PC-3 (cell line): ENCODE measurements at regions of chr10 and their contacts with region 1.

Region 1: DNA sequence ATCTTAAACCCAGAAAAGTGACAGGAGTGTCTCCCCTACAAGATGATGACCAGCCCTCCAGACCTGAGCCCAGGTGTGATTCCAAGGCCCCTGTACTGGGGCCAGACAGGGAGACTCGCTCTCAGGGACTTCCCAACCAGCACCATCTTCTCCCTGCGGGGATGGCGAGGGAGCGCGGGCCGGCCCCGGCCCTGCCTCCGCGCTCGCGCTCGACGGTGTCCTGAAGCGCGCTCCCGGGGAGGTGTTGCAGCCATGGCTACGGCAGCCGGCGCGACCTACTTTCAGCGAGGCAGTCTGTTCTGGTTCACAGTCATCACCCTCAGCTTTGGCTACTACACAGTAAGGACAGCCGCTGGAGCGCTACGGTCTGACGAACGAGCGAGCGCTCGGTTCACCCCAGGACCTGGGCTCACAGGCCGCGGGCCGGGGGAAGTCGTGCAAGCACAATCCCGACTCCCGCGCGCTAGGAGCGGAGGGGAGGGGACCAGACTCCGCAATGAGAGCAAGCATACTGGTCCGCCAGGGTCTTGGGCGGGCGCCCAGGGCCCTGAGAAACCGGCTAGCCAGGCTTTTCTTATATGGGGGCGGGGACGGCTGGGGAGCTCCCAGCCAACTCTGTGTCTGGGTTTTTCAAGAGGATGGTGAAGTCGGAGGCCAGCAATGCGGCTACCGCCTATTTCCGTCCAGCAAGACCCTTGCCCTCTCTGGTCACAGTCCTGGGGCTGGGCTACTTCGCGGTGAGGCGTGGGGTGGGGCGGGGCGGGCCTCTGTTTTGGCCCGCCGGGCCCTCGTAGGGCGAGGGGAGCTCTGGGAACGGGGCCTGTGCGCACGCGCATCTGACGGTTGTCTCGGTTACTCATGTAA is at the start of gene TMEM254:
- DNase-seq: peak; percentile 100
- ATAC-seq: peak; percentile 85
- H3K4me3 ChIP-seq: peak within 1 kb of the TSS; percentile 67
- H3K27ac ChIP-seq: peak within 1 kb of the TSS; percentile 72
- H3K4me1 ChIP-seq: peaks cover 39% of the 10 kb centered on the region
- H3K27me3 ChIP-seq: no peaks in the 10 kb centered on the region
- CTCF ChIP-seq: no peak
- total RNA-seq, gene TMEM254: 53.7 and 68.3 TPM in 2 replicates

Region 2: GRCh38 chr10:79242620-79243152 is 836.0 kb before region 1 on chr10:
- CTCF ChIA-PET with region 1: no interaction called
- POLR2A ChIA-PET with region 1: interaction called, 28 read pairs
- intact Hi-C with region 1: no loop called
- DNase-seq: peak; percentile 99
- ATAC-seq: peak; percentile 83
- H3K4me3 ChIP-seq: peak overlapping the region; percentile 70
- H3K27ac ChIP-seq: no peak overlapping the region; the same call in 1 of the 2 replicates
- H3K4me1 ChIP-seq: peaks cover 21% of the 10 kb centered on the region
- H3K27me3 ChIP-seq: no peaks in the 10 kb centered on the region
- CTCF ChIP-seq: no peak

Region 3: GRCh38 chr10:79471776-79472175 is 606.9 kb before region 1 on chr10:
- CTCF ChIA-PET with region 1: no interaction called
- POLR2A ChIA-PET with region 1: interaction called, 15 read pairs
- intact Hi-C with region 1: no loop called
- DNase-seq: no peak
- ATAC-seq: no peak
- H3K4me3 ChIP-seq: no peak overlapping the region
- H3K27ac ChIP-seq: no peak overlapping the region
- H3K4me1 ChIP-seq: peaks cover 9% of the 10 kb centered on the region
- H3K27me3 ChIP-seq: no peaks in the 10 kb centered on the region
- CTCF ChIP-seq: no peak

Region 4: GRCh38 chr10:80136081-80136571 is 57.4 kb after region 1 on chr10:
- CTCF ChIA-PET with region 1: interaction called, 3 read pairs
- POLR2A ChIA-PET with region 1: interaction called, 14 read pairs
- intact Hi-C with region 1: no loop called
- DNase-seq: peak; percentile 15
- ATAC-seq: peak; percentile 48
- H3K4me3 ChIP-seq: no peak overlapping the region
- H3K27ac ChIP-seq: no peak overlapping the region
- H3K4me1 ChIP-seq: peaks cover 14% of the 10 kb centered on the region
- H3K27me3 ChIP-seq: peaks cover 22% of the 10 kb centered on the region
- CTCF ChIP-seq: no peak

Region 5: DNA sequence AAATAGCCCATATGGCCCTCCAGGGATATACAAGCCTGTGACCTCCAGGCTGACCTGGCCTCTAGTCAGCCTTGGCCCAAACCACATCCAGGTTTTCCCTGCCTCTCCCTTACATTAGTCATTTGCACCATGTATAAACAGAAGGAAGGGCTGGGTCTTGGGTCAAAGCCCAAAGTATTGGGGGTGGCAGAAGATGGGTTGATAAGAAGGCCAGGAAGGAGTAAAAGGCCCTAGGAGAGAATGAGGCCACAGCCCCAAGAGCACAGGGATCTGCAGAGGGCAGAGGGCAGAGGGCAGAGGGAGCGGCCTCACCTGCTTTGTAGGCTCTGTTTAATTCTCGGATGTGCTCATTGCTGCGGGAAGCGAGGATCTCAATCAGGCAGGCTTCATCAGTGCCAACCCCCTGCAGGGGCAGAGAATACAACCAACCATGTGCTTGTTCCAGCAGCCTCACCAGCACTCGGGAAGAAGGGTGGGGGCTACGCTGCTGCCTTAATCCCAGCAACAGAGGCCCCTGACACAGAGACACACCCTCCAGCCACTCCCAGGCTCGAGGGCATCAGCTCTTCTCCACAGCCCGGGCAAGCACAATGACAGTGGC is 85.2 kb after region 1 on chr10:
- CTCF ChIA-PET with region 1: no interaction called
- POLR2A ChIA-PET with region 1: interaction called, 3 read pairs
- intact Hi-C with region 1: loop called (anchors 1 kb)
- DNase-seq: peak; percentile 100
- ATAC-seq: peak; percentile 71
- H3K4me3 ChIP-seq: peak overlapping the region; percentile 23
- H3K27ac ChIP-seq: peak overlapping the region; percentile 78
- H3K4me1 ChIP-seq: peaks cover 55% of the 10 kb centered on the region
- H3K27me3 ChIP-seq: no peaks in the 10 kb centered on the region
- CTCF ChIP-seq: no peak

Region 6: DNA sequence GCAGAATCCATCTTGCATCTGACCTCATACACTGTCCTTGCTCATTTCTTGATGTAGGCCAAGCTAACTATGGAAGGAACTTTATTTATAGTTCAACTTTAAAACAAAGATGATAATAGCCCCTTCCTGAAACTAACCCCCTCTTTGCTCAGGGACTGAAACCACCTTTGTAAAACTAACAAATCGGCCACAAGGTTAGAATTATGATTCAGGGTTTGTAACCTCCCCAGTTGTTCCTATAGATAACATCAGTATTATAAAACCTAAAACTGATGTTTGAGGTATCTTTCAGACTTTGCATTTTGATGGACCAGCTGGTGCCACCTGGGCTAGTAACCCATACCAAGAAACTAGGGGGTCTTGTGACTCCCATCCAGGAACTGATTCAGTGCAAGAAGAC is 602.5 kb after region 1 on chr10:
- CTCF ChIA-PET with region 1: no interaction called
- POLR2A ChIA-PET with region 1: no interaction called
- intact Hi-C with region 1: no loop called
- DNase-seq: no peak
- ATAC-seq: no peak
- H3K4me3 ChIP-seq: no peak overlapping the region
- H3K27ac ChIP-seq: no peak overlapping the region
- H3K4me1 ChIP-seq: no peaks in the 10 kb centered on the region
- H3K27me3 ChIP-seq: no peaks in the 10 kb centered on the region
- CTCF ChIP-seq: no peak